ENCODE measurements at regions of chr19 and their contacts with region 1.

Region 1: DNA sequence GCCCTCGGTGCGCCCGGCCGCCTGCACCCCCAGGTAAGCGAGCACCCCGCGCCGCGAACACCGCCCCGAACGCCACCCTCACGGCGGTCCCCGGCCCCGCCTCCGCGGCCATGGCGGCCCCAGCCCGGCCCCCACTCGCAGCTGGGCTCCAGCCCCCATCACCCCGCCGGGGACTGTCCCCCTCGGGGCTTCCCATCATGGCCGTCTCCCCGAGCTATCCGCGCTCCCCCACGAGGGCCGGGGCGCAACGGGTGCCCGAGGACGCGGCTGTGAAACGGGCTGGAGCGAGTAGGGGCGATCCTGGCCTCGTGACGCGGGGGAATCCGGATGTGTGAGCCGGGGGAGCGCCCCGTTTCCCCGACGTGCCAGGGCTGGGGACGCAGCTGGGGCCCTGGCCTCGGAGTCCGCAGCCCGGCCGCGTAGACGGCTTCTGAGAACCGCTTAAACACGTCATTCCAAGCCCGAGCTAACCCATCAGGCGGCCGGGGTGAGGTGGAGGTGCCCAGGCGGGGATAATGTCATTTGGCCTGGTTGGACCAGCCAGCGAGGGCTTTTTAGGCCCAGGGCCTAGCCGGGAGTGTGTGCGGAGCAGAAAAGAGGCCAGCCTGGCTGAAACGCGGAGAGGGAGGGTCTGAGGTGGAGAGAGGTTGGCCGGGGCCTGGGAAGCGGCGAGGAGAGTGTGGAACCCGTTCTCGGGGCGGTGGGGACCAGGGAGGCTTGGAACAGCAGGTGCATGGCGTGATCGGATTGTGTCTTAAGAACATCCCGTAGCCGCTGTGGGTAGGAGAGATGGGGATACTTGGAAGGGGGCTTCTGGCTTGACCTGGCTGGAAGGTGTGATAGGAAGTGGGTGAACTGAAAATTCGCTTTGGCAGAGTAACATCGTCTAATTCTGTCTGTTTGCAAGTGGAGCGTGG is 550 bp downstream of the CERS4 start:
- DNase-seq: peak; percentile 58
- H3K4me3 ChIP-seq: peak overlapping the region; percentile 86
- H3K27ac ChIP-seq: peak overlapping the region; percentile 79
- H3K4me1 ChIP-seq: peaks cover 57% of the 10 kb centered on the region
- CTCF ChIP-seq: no peak

Region 2: DNA sequence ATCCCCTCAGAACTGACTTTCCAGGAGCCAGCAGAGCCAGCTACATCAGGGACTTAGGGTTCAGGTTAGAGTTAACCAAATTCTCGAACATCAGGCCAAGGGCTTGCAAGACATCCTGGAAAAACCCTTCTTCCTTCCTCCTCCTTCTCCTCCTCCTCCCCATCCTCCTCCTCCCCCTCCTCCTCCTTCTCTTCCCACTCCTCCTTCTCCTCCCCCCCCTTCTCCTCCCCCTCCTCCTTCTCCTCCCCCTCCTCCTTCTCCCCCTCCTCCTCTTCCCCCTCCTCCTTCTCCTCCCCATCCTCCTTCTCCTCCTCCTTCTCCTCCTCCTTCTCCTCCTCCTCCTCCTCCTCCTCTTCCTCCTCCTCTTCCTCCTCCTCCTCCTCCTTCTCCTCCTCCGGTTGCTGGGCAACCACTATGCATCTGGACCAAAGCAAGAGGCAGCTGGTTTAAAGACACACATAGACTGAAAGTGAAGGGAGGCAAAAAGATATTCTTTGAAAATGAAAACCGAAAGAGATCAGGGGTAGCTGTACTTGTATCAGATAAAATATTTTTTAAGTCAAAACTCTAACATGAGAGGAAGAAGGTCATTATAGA is 163.1 kb before region 1 on chr19:
- CTCF ChIA-PET with region 1: no interaction called
- POLR2A ChIA-PET with region 1: no interaction called
- intact Hi-C with region 1: no loop called
- DNase-seq: no peak
- H3K4me3 ChIP-seq: no peak overlapping the region
- H3K27ac ChIP-seq: no peak overlapping the region
- H3K4me1 ChIP-seq: peaks cover 12% of the 10 kb centered on the region
- CTCF ChIP-seq: no peak

Region 3: DNA sequence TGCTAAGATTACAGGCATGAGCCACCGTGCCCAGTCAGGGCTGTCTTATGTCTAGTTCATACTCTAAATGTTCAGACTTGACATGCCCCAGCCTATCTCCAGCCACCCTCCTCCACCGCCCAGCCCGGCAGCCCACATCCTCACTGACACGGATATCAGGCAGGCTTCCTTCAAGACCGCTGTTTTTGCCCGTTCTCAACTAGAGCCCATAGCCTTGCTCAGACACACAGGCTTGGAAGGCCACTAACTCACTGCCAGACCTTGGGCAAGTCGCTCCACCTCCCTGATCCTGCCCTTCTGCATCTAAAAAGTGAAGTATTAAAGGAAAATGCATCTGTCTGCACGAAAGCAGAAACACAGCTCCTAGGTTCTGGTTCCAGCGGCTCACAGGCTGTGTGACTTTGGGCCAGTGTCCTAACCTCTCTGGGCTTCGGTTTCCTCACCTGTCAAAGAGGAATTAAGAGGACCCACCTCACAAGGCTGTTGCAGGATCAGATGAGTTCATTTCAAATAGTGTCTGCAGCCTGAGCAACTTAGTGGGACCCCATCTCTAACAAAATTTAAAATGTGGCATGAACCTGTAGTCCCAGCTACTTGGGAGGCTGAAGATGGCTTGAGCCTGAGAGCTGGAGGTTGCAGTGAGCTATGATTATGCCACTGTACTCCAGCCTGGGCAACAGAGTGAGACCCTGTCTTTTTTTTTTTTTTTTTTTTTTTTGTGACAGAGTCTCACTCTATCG is 15.0 kb before region 1 on chr19:
- CTCF ChIA-PET with region 1: no interaction called
- POLR2A ChIA-PET with region 1: interaction called, 14 read pairs
- intact Hi-C with region 1: loop called (anchors 1 kb)
- DNase-seq: peak; percentile 84
- H3K4me3 ChIP-seq: peak overlapping the region; percentile 39
- H3K27ac ChIP-seq: peak overlapping the region; percentile 95
- H3K4me1 ChIP-seq: peaks cover 61% of the 10 kb centered on the region
- CTCF ChIP-seq: no peak